ENCODE measurements at regions of chr11 and their contacts with region 1.

Region 1: DNA sequence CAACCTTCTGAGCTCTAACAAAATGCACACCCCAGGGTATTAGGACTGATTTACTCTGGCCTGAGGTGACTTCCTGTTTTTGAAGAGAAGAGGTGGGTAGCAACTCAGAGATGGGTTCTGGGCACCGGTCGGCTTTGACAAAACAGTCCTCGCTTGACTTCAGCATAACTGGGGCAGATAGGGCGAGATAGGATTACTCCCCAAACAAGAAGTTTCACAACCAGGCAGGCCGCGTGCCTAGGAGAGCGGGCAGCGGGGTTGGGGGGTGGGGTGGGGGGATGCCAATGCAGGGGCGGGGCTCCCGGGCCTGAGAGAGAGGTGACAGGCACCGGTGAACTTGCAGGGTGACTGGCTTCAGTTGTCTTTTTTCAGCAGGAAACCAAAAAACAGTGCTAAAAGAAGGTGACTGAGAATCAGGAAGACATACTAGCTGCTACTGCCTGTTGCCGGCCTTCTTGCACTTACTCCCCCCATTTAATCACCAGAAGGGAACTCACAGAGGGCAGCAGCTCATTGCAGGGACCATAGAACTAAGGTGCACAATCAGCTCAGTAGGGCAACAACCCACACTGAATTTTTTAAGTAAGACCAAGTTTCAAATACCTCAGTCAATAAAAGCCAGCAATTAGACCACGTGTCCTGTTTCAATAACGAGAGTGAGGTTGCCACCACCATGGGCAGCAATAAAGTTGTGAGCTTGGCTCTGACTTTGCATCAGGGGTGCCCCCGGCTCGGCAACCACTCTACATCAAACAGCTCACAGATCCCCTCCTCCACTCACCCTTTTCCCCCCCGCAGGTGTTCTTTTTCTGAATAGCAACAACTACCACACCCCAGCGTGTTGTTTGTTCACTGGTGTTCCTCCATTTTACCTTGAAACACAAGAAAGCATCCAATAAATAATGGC is 37.2 kb upstream of the ETS1 start:
- DNase-seq: peak; percentile 73
- ATAC-seq: peak; percentile 52
- H3K4me3 Mint-ChIP-seq: peak overlapping the region; percentile 69
- H3K27ac Mint-ChIP-seq: peak overlapping the region; percentile 97
- H3K4me1 Mint-ChIP-seq: peaks cover 88% of the 10 kb centered on the region
- H3K27me3 Mint-ChIP-seq: no peaks in the 10 kb centered on the region

Region 2: DNA sequence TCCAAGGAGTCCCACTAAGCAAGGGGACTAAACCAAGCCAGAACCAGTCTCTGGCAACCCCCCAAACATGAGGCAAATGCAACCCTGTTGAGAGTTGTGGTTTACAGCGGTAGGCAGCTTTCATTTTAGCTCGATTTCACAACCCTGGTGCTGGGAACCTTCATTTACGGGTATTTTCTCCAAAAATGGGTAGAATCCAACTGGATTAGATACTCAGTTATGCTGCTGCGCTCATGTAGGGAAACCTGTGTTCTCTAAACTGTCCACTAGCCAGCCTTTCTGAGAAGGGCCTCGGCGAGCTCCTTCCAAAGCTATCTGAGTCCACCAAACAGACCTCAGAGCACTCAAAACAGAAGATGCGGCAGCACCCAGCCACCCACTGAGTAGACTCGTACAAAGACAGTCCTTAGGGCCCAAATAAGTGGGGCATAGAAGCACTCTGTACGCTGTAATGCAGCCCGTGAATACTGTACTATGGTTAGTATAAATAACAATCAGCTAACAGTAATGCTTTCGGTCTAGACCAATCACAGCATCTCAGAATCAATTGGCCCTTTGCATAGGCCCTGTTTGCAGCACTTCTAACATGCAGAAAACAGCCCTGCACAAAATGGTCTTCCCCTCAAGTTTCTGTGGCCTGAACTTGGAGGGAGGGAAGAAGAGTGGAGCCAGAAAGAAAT is 141.9 kb before region 1 on chr11:
- CTCF ChIA-PET with region 1: interaction called, 8 read pairs
- POLR2A ChIA-PET with region 1: interaction called, 11 read pairs
- DNase-seq: peak; percentile 65
- ATAC-seq: peak; percentile 70
- H3K4me3 Mint-ChIP-seq: peak overlapping the region; percentile 63
- H3K27ac Mint-ChIP-seq: peak overlapping the region; percentile 88
- H3K4me1 Mint-ChIP-seq: peaks cover 94% of the 10 kb centered on the region
- H3K27me3 Mint-ChIP-seq: no peaks in the 10 kb centered on the region

Region 3: GRCh38 chr11:128512474-128512996 is 112.0 kb before region 1 on chr11:
- CTCF ChIA-PET with region 1: interaction called, 247 read pairs
- POLR2A ChIA-PET with region 1: interaction called, 565 read pairs
- DNase-seq: peak; percentile 68
- ATAC-seq: peak; percentile 45
- H3K4me3 Mint-ChIP-seq: peak overlapping the region; percentile 96
- H3K27ac Mint-ChIP-seq: peak overlapping the region; percentile 82
- H3K4me1 Mint-ChIP-seq: peaks cover 84% of the 10 kb centered on the region
- H3K27me3 Mint-ChIP-seq: no peaks in the 10 kb centered on the region

Region 4: DNA sequence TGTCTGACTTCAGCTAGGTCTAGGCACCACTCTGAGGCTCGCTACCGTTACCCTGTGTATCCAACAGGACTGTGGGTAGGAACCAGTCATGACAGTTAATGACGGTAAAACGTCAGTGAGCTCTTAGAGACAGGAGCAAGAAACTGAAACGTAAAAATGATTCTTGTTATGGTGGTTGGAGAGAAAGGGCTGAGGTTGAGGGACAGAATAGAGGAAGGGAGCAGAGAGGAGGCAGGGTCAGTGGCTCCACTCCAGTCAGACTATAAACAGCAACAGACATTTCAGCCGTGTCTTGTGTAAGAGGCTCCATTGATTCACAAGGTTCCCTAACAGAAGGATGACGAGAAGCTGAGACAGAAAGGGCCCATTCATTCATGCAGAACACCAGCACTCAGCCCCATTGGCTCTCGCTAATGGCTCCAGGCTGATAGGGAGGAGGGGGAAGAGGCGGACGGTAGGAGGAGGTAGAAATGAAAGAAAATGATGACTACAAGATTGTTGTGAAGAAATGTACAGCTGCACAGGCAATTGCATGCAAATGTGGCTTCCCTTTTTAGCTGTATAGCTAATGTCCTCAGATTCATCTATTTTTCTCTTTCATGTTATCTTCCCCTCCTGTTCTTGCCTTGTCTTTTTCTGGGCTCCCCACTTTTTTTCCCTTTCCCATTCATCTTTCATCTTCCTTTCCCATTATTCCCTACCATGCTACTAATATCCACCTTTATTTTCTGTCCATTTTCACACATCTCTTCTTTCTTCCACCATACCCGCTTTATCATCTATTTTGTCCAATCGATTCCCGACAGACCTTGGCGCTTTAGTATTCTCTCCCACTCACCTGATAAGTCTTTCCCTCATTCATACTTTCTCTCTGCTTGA is 71.5 kb before region 1 on chr11:
- CTCF ChIA-PET with region 1: interaction called, 12 read pairs
- POLR2A ChIA-PET with region 1: interaction called, 19 read pairs
- DNase-seq: no peak
- ATAC-seq: no peak
- H3K4me3 Mint-ChIP-seq: no peak overlapping the region
- H3K27ac Mint-ChIP-seq: peak overlapping the region; percentile 62
- H3K4me1 Mint-ChIP-seq: peaks cover 59% of the 10 kb centered on the region
- H3K27me3 Mint-ChIP-seq: no peaks in the 10 kb centered on the region

Region 5: GRCh38 chr11:128779036-128779435 is 154.5 kb after region 1 on chr11:
- CTCF ChIA-PET with region 1: no interaction called
- POLR2A ChIA-PET with region 1: no interaction called
- DNase-seq: no peak
- ATAC-seq: no peak
- H3K4me3 Mint-ChIP-seq: no peak overlapping the region
- H3K27ac Mint-ChIP-seq: no peak overlapping the region
- H3K4me1 Mint-ChIP-seq: peaks cover 51% of the 10 kb centered on the region
- H3K27me3 Mint-ChIP-seq: no peaks in the 10 kb centered on the region

Region 6: GRCh38 chr11:128868841-128869580 is 244.5 kb after region 1 on chr11:
- CTCF ChIA-PET with region 1: no interaction called
- POLR2A ChIA-PET with region 1: no interaction called
- DNase-seq: peak; percentile 62
- ATAC-seq: peak; percentile 69
- H3K4me3 Mint-ChIP-seq: no peak overlapping the region
- H3K27ac Mint-ChIP-seq: no peak overlapping the region
- H3K4me1 Mint-ChIP-seq: peaks cover 5% of the 10 kb centered on the region
- H3K27me3 Mint-ChIP-seq: peaks cover 10% of the 10 kb centered on the region

Measured in activated CD8-positive, alpha-beta T cell treated with anti-CD3 and anti-CD28 coated beads, Interleukin-2, amount 10 ng/mL, durations not matched to agents 7 days and 5 days (primary cell).